Caco-2 (cell line): ENCODE measurements at regions of chr4 and their contacts with region 1.

Region 1: DNA sequence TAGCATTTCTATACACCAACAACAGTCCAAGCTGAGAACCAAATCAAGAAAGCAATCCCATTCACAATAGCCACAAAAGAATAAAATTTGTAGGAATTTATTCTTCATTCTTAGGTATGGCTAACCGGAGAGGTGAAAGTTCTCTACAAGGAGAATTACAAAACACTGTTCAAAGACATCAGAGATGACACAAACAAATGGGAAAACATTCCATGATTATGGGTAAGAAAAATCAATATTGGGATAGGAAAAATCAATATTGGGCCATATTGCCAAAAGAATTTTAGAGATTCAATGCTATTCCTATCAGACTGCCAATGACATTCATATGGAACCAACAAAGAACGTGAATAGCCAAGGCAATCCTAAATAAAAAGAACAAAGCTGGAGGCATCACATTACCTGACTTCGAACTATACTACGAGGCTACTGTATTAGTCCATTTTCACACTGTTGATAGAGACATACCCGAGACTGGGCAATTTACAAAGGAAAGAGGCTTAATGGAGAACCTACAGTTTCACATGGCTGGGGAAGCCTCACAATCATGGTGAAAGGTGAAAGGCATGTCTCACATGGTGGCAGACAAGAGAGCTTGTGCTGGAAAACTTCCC is 49.1 kb downstream of the NCAPG start:
- DNase-seq: no peak
- H3K4me3 ChIP-seq: no peak overlapping the region
- H3K4me3 Mint-ChIP-seq: no peak overlapping the region
- H3K27ac Mint-ChIP-seq: no peak overlapping the region
- H3K4me1 ChIP-seq: no peaks in the 10 kb centered on the region
- H3K4me1 Mint-ChIP-seq: no peaks in the 10 kb centered on the region
- H3K27me3 ChIP-seq: no peaks in the 10 kb centered on the region
- H3K27me3 Mint-ChIP-seq: no peaks in the 10 kb centered on the region
- CTCF ChIP-seq: no peak

Region 2: DNA sequence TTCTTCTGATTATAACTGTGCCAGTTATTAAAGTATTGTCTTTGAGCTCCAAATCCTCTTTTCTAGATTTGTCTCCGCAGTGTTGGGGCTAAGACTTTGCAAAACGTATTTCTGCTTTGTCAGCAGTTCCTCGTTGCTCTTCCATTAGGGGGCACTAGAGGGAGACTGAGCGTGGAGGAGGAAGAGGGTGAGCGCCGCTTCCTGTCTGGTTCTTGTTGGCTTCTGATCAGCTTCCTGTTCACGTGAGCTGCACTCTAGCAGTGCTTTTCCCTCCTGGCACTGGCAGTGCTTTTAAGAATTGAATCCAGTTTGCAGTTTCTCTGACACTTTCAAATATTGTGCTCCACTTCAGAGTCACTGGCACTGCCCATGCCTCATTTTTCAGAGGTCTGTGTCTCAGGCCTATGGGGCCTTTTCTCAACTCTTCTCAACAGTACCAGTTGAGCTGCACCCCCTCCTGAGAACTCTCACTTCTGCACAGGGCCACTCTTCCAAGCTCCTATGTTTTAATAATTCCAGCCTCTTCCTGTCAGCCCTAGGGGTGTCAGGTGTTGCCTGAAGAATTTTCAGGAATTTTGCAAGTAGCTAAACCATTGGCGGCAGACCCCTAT is 216.0 kb after region 1 on chr4:
- CTCF ChIA-PET with region 1: no interaction called
- POLR2A ChIA-PET with region 1: no interaction called
- intact Hi-C with region 1: loop called (anchors 5 kb)
- DNase-seq: peak; percentile 23 to 36
- H3K4me3 ChIP-seq: no peak overlapping the region
- H3K4me3 Mint-ChIP-seq: no peak overlapping the region
- H3K27ac Mint-ChIP-seq: no peak overlapping the region
- H3K4me1 ChIP-seq: no peaks in the 10 kb centered on the region
- H3K4me1 Mint-ChIP-seq: no peaks in the 10 kb centered on the region
- H3K27me3 ChIP-seq: no peaks in the 10 kb centered on the region
- H3K27me3 Mint-ChIP-seq: no peaks in the 10 kb centered on the region
- CTCF ChIP-seq: no peak

Region 3: GRCh38 chr4:18180892-18181291 is 321.0 kb after region 1 on chr4:
- CTCF ChIA-PET with region 1: no interaction called
- POLR2A ChIA-PET with region 1: no interaction called
- intact Hi-C with region 1: no loop called
- DNase-seq: no peak
- H3K4me3 ChIP-seq: no peak overlapping the region
- H3K4me3 Mint-ChIP-seq: no peak overlapping the region
- H3K27ac Mint-ChIP-seq: no peak overlapping the region
- H3K4me1 ChIP-seq: no peaks in the 10 kb centered on the region
- H3K4me1 Mint-ChIP-seq: no peaks in the 10 kb centered on the region
- H3K27me3 ChIP-seq: no peaks in the 10 kb centered on the region
- H3K27me3 Mint-ChIP-seq: peaks cover 3% of the 10 kb centered on the region
- CTCF ChIP-seq: no peak